ENCODE measurements at regions of chr15 and their contacts with region 1.

Region 1: DNA sequence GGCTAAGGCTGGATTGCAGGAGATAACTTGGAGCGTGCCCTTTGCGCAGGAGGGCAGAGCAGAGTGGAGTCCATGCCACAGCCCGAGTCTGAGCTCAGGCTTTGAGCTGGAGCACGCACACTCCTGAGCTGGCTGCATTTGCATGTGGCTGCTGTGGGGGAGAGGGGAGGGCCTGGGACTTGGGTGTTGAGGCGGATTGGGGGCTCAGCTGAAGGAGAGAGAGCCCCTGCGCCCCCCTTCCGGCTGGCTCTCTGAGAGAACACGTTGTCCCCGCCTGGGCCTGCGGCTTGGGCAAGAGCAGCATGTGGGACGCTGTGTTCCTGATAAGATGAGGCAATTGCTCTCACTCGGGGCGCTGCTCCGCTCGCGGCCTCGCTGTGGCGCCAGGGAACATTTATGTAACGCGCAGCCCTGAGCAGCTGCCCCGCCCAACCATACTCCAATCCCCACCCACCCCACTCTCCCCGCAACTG is 39.1 kb downstream of the KLF13 start:
- DNase-seq: peak; percentile 91
- ATAC-seq: peak; percentile 63
- H3K4me3 Mint-ChIP-seq: peak overlapping the region; percentile 54
- H3K27ac Mint-ChIP-seq: peak overlapping the region; percentile 94
- H3K4me1 Mint-ChIP-seq: peaks cover 99% of the 10 kb centered on the region
- H3K27me3 Mint-ChIP-seq: no peaks in the 10 kb centered on the region

Region 2: DNA sequence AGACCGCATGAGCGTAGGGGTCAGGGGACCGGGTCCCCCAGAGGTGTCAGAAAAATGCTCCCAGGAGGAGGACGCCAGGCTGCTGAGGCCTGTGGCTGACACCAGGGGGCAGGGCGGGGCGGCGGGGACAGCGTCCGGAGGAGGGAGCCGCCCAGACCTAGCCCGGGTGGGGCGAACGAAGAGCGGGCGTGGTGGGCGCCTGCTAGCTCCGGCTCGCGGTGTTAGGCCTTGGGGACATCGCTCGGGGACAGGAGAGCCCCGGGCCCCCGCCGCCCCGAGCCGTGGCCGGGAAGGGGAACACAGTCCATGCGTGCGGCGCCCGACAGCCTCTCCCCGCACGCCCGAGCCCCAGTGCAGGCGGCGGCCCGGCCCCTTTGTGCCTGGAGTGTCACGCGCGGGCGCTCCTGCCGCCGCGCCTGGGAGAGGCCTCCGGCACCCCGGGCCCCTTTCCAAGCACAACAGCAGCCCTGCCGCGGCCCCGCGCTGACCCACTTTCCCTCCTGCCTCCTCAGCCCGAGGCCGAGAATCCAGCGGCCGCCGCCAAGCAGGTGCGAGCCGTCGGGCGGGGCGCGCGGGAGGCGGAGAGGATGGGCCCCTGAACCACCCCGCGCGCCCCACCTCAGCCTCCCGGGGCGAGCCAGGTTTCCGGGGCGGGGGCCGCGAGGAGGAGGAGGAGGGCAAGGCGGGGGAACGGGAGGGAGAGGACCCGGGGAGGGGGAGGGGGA is 150.0 kb before region 1 on chr15:
- CTCF ChIA-PET with region 1: interaction called, 11 read pairs
- POLR2A ChIA-PET with region 1: interaction called, 8 read pairs
- DNase-seq: peak; percentile 89
- ATAC-seq: peak; percentile 82
- H3K4me3 Mint-ChIP-seq: peak overlapping the region; percentile 71
- H3K27ac Mint-ChIP-seq: peak overlapping the region; percentile 63
- H3K4me1 Mint-ChIP-seq: peaks cover 42% of the 10 kb centered on the region
- H3K27me3 Mint-ChIP-seq: no peaks in the 10 kb centered on the region

Region 3: GRCh38 chr15:31344823-31345605 is 20.7 kb before region 1 on chr15:
- CTCF ChIA-PET with region 1: interaction called, 211 read pairs
- POLR2A ChIA-PET with region 1: interaction called, 90 read pairs
- DNase-seq: peak; percentile 61
- ATAC-seq: peak; percentile 21
- H3K4me3 Mint-ChIP-seq: peak overlapping the region; percentile 95
- H3K27ac Mint-ChIP-seq: peak overlapping the region; percentile 97
- H3K4me1 Mint-ChIP-seq: peaks cover 98% of the 10 kb centered on the region
- H3K27me3 Mint-ChIP-seq: no peaks in the 10 kb centered on the region

Region 4: DNA sequence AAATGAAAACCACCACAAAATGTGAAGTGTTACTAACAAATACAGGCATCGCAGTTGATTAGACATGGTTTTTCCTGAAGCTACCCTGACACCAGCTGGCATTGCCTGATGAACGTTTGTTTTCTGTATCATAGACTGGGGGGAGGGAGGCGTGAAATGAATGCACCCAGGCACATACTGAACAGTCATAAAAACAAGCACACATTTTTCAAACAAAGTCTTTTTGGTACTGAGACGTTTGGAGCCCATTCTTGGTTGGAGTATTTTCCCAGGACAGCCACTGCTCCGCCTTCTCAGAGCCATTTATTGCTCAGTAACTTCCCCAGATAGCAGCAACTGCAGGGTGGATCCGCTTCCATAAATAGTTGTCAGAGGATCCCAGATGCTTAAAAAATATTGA is 13.4 kb after region 1 on chr15:
- CTCF ChIA-PET with region 1: interaction called, 19 read pairs
- POLR2A ChIA-PET with region 1: interaction called, 5 read pairs
- DNase-seq: no peak
- ATAC-seq: no peak
- H3K4me3 Mint-ChIP-seq: no peak overlapping the region
- H3K27ac Mint-ChIP-seq: peak overlapping the region; percentile 72
- H3K4me1 Mint-ChIP-seq: peaks cover 67% of the 10 kb centered on the region
- H3K27me3 Mint-ChIP-seq: no peaks in the 10 kb centered on the region

Region 5: GRCh38 chr15:31396881-31397560 is 31.3 kb after region 1 on chr15:
- CTCF ChIA-PET with region 1: interaction called, 21 read pairs
- POLR2A ChIA-PET with region 1: interaction called, 18 read pairs
- DNase-seq: peak; percentile 13
- ATAC-seq: no peak
- H3K4me3 Mint-ChIP-seq: no peak overlapping the region
- H3K27ac Mint-ChIP-seq: no peak overlapping the region
- H3K4me1 Mint-ChIP-seq: peaks cover 60% of the 10 kb centered on the region
- H3K27me3 Mint-ChIP-seq: no peaks in the 10 kb centered on the region

Measured in activated CD8-positive, alpha-beta T cell treated with anti-CD3 and anti-CD28 coated beads, Interleukin-2, amount 10 ng/mL, durations not matched to agents 7 days and 5 days (primary cell).